Activated CD8-positive, alpha-beta T cell treated with anti-CD3 and anti-CD28 coated beads for 36 hours (primary cell): ENCODE measurements at regions of chr15 and their contacts with region 1.

Region 1: DNA sequence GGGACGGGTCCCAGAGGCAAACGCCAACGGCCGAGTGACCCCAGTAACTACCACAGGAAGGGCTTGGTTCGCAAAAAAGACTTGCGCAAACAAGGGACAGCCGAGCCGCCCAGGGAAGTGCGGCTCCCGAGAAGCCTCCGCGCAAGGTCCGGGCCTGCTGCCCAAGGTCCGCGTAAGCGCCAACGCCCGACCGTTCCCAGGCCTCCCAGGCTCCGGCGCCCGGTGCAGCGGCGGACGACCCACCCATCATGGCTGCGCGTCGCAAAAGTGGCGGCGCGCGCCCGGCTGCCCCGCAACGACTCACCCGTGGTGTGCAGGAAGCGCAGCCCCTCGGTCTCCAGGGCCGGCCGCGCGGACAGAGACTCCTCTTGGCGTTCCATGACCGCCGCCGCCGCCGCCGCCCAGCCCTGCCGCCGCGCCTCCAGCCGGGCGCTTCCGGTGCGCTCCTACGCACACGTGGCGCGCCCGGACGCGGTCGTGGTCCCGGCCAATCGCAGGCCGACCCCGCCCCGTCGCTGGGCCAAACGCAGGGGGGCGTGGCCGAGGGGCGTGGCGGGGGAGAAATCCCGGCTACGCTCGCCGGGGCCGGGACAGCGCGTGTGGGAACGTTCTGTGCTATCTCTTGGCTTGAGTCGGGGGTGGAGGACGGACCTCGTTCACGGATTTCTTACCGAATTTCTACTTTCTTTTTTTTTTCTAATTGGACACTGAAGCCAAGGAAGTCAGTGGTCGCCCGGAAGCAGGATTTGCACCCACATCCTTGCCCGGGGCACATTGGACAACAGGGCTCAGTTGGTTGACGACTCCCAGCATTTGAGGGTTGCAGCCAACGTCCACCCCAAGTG is at the start of gene SELENOS:
- DNase-seq: peak; percentile 88
- ATAC-seq: peak; percentile 93
- H3K4me3 Mint-ChIP-seq: peak within 1 kb of the TSS; percentile 97
- H3K27ac Mint-ChIP-seq: peak within 1 kb of the TSS; percentile 86
- H3K4me1 Mint-ChIP-seq: peaks cover 25% of the 10 kb centered on the region
- H3K27me3 Mint-ChIP-seq: no peaks in the 10 kb centered on the region
- CTCF ChIP-seq: peak; percentile 14
- total RNA-seq, gene SELENOS: 18.8 to 21.6 TPM

Region 2: GRCh38 chr15:101070502-101071273 is 206.6 kb before region 1 on chr15:
- CTCF ChIA-PET with region 1: no interaction called
- POLR2A ChIA-PET with region 1: no interaction called
- intact Hi-C with region 1: no loop called
- DNase-seq: no peak
- ATAC-seq: peak; percentile 74
- H3K4me3 Mint-ChIP-seq: no peak overlapping the region
- H3K27ac Mint-ChIP-seq: peak overlapping the region; percentile 58
- H3K4me1 Mint-ChIP-seq: peaks cover 9% of the 10 kb centered on the region
- H3K27me3 Mint-ChIP-seq: no peaks in the 10 kb centered on the region
- CTCF ChIP-seq: no peak

Region 3: DNA sequence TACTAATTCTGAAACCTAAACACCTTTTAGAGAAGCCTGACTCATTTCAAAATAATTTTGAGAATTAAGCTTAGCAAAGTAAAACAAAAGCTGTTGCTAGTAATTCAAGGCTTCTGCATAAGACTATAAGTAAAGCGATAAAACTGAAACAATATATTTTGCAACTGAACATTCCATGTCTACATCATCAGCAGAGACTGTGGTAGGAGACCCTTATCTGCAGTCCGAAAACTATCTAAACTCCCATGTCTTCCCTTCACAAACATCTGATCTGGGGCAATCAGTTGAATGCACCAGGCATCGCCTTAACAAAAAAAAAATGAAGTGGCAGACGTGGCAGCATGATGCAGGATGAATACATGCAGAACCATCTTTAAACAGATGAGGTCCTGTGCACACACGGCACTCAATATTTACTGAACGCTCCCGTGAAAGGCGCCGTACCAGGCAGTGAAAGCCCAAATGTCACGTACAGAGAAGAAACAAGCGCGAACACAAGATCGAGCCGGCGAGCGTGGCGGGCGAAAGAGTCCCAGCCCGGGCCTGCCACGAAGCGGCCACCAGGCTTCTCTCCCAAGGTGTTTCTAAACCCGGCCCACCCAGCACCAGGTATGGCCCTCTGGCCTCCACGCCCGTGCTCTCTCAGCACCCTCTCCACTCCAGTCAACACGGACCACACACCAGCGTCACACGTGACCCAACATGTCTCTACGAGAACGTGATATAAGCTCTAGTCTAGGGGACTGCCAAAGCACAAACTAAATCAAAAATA is 88.4 kb before region 1 on chr15:
- CTCF ChIA-PET with region 1: no interaction called
- POLR2A ChIA-PET with region 1: no interaction called
- intact Hi-C with region 1: no loop called
- DNase-seq: no peak
- ATAC-seq: peak; percentile 70
- H3K4me3 Mint-ChIP-seq: peak overlapping the region; percentile 18
- H3K27ac Mint-ChIP-seq: peak overlapping the region; percentile 84
- H3K4me1 Mint-ChIP-seq: peaks cover 90% of the 10 kb centered on the region
- H3K27me3 Mint-ChIP-seq: no peaks in the 10 kb centered on the region
- CTCF ChIP-seq: no peak

Region 4: DNA sequence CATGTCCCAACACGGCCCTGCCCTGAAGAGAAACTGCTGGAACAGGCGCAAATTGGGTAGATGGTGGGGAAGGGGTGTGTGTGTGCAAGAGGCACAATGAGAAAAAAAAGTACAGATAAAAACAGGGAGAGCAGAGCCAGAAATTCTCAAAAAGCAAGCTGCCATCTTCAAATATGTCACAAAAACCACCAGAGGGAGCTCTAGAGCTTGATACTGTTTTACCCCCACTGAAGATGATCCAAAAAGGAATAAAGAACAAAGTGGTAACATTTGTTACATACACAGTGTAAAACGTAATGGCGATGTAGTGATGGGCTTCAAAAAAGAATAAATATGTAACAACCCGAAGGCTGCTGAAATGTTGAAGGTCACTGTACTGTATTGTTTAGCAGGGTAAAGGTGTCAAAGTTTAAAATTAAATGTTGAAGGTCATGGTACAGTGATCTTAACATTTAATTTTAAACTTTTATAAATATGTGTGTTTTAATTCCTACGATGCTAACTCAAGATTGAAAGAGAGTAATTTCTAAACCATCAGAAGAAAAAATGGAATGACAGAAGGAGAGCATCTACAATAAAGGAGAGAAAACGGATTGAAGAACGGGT is 11.8 kb after region 1 on chr15:
- CTCF ChIA-PET with region 1: interaction called, 21 read pairs
- POLR2A ChIA-PET with region 1: interaction called, 133 read pairs
- intact Hi-C with region 1: no loop called
- DNase-seq: no peak
- ATAC-seq: peak; percentile 43
- H3K4me3 Mint-ChIP-seq: no peak overlapping the region
- H3K27ac Mint-ChIP-seq: peak overlapping the region; percentile 44
- H3K4me1 Mint-ChIP-seq: peaks cover 51% of the 10 kb centered on the region
- H3K27me3 Mint-ChIP-seq: no peaks in the 10 kb centered on the region
- CTCF ChIP-seq: peak; percentile 81